Lower leg skin (tissue), 4 donors: ENCODE measurements at regions of chr4 and their contacts with region 1.

Region 1: GRCh38 chr4:25290490-25291067 is 22.0 kb upstream of the ZCCHC4 start:
- DNase-seq: no peak
- H3K4me3 ChIP-seq: no peak overlapping the region
- CTCF ChIP-seq: no peak
- POLR2A ChIP-seq: no peak

Region 2: GRCh38 chr4:24794916-24795665 is 495.5 kb before region 1 on chr4 and contains the start of gene SOD3:
- intact Hi-C with region 1: no loop called
- DNase-seq: peak; percentile 72 to 95
- H3K4me3 ChIP-seq: no peak within 1 kb of the TSS
- CTCF ChIP-seq: no peak
- POLR2A ChIP-seq: no peak
- total RNA-seq, gene SOD3: 48.3 to 73.6 (median 62.7) TPM

Region 3: DNA sequence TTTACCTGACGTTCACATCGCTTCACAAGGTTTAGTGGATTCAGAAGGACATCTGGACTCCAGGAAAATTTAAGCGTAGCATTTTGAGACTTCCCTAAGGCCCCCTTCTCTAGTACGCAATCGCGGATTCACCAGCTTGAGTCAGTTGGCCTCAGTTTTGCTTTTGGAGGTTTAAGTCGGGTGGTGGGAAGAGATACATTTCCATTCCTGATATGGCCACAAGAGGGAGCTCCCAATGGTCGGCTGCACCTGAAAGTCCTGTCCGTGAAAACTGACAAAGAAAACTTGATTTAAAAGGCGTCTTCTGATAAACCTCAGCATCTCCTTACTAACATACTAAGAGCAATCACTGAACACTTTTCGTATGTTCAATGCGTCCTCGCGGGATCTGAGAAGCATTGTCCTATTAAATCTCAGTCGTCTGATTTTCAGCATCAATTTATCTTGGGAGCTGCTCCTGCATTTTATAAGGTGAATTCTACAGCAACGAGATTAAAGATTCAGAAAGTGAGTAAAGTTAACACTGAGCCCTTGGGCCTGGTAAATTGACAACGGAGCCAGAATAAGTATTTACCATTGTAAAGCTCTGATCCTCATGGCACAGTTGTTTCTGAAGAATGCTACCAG is 310.4 kb before region 1 on chr4:
- intact Hi-C with region 1: no loop called
- DNase-seq: peak; percentile 54 to 88
- H3K4me3 ChIP-seq: no peak overlapping the region
- CTCF ChIP-seq: peak in 1 of 3 donors; percentile 15
- POLR2A ChIP-seq: no peak

Region 4: GRCh38 chr4:25246680-25247611 is 43.6 kb before region 1 on chr4:
- intact Hi-C with region 1: loop called (anchors 5 kb)
- DNase-seq: no peak
- H3K4me3 ChIP-seq: no peak overlapping the region
- CTCF ChIP-seq: no peak
- POLR2A ChIP-seq: no peak

Region 5: DNA sequence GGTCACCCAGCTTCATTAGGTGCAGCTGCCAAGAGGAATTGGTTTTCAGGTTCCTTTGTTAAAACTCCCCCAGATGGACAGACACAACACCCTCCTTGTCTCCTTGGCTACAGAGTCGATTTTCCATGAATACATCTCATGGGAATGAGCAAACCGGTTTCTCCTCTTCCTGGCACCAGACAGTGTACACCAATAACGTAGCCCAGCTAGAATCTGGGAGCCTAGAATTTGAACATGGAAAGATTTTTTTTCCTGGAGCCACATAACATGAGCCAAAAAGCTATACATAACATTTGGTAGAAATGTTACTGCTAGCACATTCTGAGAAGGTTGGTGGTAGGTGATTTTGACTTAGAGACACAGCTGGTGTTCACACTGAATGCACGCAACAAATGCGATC is 302.2 kb after region 1 on chr4:
- intact Hi-C with region 1: no loop called
- DNase-seq: no peak
- H3K4me3 ChIP-seq: no peak overlapping the region
- CTCF ChIP-seq: no peak
- POLR2A ChIP-seq: no peak

Region 6: GRCh38 chr4:26731351-26732035 is 1440.9 kb after region 1 on chr4:
- intact Hi-C with region 1: no loop called
- DNase-seq: no peak
- H3K4me3 ChIP-seq: no peak overlapping the region
- CTCF ChIP-seq: no peak
- POLR2A ChIP-seq: no peak